ENCODE measurements at regions of chr1 and their contacts with region 1.

Region 1: GRCh38 chr1:229094476-229095311 is 176.2 kb upstream of the RAB4A start:
- DNase-seq: peak in 1 of 2 donors; percentile 59
- H3K4me3 ChIP-seq: no peak overlapping the region
- H3K27ac ChIP-seq: peak overlapping the region in 1 of 2 donors; percentile 28
- H3K4me1 ChIP-seq: peaks cover 0 to 15% of the 10 kb centered on the region in 2 donors
- H3K27me3 ChIP-seq: no peaks in the 10 kb centered on the region
- CTCF ChIP-seq: no peak

Region 2: DNA sequence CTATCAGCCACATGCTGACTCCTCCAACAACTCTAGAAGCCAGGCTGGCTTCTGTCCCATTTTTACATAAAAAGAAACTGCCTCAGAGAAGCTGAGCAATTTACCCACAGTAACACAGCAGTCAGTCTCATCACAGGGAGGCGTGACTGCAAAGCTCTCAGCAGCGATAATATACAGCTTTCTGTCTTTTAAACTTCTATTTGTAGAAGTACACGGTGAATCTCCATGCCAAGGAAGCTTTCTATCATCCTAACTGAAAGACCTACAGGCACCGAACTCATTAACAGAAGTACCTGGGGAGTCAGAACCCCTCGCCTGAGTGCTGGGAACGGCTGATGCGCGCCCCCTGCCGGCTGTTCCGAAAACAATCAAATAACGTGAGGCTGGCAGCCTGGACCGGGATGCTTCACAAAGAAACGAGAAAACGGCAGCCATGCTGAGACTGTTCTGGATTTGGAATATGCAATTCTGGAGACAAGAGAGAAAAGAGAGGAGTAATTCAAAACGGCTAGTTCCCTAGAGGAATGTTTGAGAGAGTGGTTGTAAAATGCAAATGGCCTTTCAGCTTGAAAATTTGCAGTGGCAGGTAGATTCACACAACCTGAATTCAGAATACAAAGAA is 132.7 kb after region 1 on chr1:
- intact Hi-C with region 1: loop called (anchors 10 kb)
- DNase-seq: peak; percentile 30 to 90
- H3K4me3 ChIP-seq: no peak overlapping the region
- H3K27ac ChIP-seq: no peak overlapping the region
- H3K4me1 ChIP-seq: peaks cover 9 to 25% of the 10 kb centered on the region in 2 donors
- H3K27me3 ChIP-seq: no peaks in the 10 kb centered on the region
- CTCF ChIP-seq: peak; percentile 74 to 86 (median 85)